ENCODE measurements at regions of chr17 and their contacts with region 1.

Region 1: GRCh38 chr17:62860907-62861848 is 53.1 kb upstream of the MARCHF10 start:
- DNase-seq: no peak
- H3K4me3 Mint-ChIP-seq: no peak overlapping the region
- H3K27ac Mint-ChIP-seq: no peak overlapping the region
- H3K4me1 Mint-ChIP-seq: no peaks in the 10 kb centered on the region
- H3K27me3 Mint-ChIP-seq: no peaks in the 10 kb centered on the region
- CTCF ChIP-seq: no peak

Region 2: GRCh38 chr17:62819475-62820212 is 41.5 kb before region 1 on chr17:
- CTCF ChIA-PET with region 1: no interaction called
- POLR2A ChIA-PET with region 1: no interaction called
- intact Hi-C with region 1: loop called (anchors 5 kb)
- DNase-seq: peak; percentile 95
- H3K4me3 Mint-ChIP-seq: peak overlapping the region; percentile 50
- H3K27ac Mint-ChIP-seq: peak overlapping the region; percentile 91
- H3K4me1 Mint-ChIP-seq: peaks cover 34% of the 10 kb centered on the region
- H3K27me3 Mint-ChIP-seq: no peaks in the 10 kb centered on the region
- CTCF ChIP-seq: no peak

Measured in MCF 10A (cell line).